Activated CD4-positive, alpha-beta T cell treated with anti-CD3 and anti-CD28 coated beads for 36 hours (primary cell): ENCODE measurements at regions of chr17 and their contacts with region 1.

Region 1: DNA sequence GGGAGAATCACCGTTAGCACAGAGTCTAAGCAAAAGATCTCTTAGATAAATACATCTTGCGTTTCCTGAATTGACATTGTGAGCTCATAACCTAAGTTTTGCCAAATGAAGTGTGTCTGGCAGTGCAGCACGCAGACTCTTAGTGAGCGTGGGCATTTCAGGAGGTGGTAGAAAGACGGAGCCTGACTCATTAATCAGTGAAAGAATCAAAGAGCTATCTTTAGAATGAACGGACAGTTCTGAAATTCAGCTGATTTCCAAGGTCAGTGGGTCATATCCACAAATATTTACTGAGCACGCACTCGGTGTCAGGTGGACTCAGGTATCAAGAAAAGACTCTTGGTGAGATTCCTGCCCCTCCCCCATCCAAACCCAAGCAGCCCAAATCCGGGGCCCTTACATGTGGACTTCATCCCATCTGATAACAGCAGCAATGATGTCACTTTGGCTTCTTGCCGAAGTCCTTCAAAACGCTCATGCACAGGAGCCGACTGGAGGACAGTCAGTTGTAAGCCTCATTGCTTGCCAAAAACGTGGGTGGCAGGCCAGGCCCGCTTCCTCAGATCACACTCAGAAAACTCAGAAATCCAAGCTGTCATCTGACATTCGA is 185.8 kb downstream of the HS3ST3A1 start:
- DNase-seq: no peak
- ATAC-seq: no peak
- H3K4me3 Mint-ChIP-seq: no peak overlapping the region
- H3K27ac Mint-ChIP-seq: no peak overlapping the region
- H3K4me1 Mint-ChIP-seq: no peaks in the 10 kb centered on the region
- H3K27me3 Mint-ChIP-seq: peaks cover 10% of the 10 kb centered on the region

Region 2: GRCh38 chr17:13337864-13338371 is 78.0 kb before region 1 on chr17:
- CTCF ChIA-PET with region 1: interaction called, 5 read pairs
- POLR2A ChIA-PET with region 1: no interaction called
- intact Hi-C with region 1: loop called in 1 of 2 experiments (anchors 10 kb)
- DNase-seq: peak; percentile 26
- ATAC-seq: no peak
- H3K4me3 Mint-ChIP-seq: no peak overlapping the region
- H3K27ac Mint-ChIP-seq: no peak overlapping the region
- H3K4me1 Mint-ChIP-seq: peaks cover 3% of the 10 kb centered on the region
- H3K27me3 Mint-ChIP-seq: peaks cover 20% of the 10 kb centered on the region